ENCODE measurements at regions of chr12 and their contacts with region 1.

Region 1: DNA sequence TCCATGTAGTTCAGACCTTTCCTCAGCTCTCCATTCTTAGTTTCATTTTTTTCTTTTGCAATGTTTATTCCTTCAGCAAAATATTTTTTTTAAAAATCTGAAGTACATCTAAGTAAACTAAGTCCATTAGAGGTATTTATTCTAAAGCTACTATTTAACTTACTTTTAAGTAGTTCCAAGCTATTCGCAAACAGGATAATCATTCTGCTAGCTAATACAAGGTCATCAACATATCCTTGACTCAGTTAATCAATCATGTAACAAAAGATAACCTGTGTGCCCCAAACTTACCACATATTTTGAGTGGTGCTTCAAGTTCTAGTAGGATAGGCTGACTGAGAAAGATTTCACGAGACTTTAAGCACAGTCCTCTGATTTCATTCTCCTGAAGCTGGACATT is 11.2 kb downstream of the PPP1CC start:
- DNase-seq: no peak
- ATAC-seq: no peak
- H3K4me3 ChIP-seq: no peak overlapping the region
- H3K27ac ChIP-seq: no peak overlapping the region
- H3K4me1 ChIP-seq: peaks cover under 1 to 2% of the 10 kb centered on the region in 2 experiments; a peak in 2 of 5 replicates
- H3K27me3 ChIP-seq: no peaks in the 10 kb centered on the region
- CTCF ChIP-seq: no peak
- EP300 ChIP-seq: no peak
- POLR2A ChIP-seq: no peak
- RAD21 ChIP-seq: no peak

Region 2: DNA sequence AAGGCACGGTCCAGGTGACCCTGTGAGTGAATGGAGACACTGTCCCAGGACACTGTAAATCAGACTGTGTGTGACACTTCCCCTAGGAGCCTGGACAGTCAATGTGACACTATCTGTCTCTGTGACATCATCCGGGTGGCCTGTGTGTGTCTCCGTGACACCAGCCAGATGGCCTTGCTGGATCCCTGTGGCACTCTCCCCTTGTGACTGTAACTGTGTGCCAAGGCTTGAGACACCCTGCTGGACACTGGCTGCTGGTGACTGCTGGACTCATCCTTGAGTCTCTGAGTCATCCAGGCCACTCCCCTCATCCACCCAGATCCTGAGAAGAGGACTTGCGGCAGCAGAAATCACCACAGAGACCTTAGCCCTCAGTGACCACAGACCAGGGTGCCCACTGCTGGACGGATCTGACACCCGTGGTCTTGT is 1106.3 kb before region 1 on chr12:
- CTCF ChIA-PET with region 1: no interaction called
- POLR2A ChIA-PET with region 1: no interaction called
- in situ Hi-C with region 1: no loop called
- intact Hi-C with region 1: no loop called
- DNase-seq: peak; percentile 22 to 31 (median 27)
- ATAC-seq: peak; percentile 79
- H3K4me3 ChIP-seq: no peak overlapping the region
- H3K27ac ChIP-seq: no peak overlapping the region
- H3K4me1 ChIP-seq: peaks cover 0 to 3% of the 10 kb centered on the region in 2 experiments; a peak in 1 of 5 replicates
- H3K27me3 ChIP-seq: peaks cover 12 to 36% of the 10 kb centered on the region in 2 experiments; a peak in 4 of 5 replicates
- CTCF ChIP-seq: no peak
- EP300 ChIP-seq: no peak
- POLR2A ChIP-seq: no peak
- RAD21 ChIP-seq: no peak

Region 3: DNA sequence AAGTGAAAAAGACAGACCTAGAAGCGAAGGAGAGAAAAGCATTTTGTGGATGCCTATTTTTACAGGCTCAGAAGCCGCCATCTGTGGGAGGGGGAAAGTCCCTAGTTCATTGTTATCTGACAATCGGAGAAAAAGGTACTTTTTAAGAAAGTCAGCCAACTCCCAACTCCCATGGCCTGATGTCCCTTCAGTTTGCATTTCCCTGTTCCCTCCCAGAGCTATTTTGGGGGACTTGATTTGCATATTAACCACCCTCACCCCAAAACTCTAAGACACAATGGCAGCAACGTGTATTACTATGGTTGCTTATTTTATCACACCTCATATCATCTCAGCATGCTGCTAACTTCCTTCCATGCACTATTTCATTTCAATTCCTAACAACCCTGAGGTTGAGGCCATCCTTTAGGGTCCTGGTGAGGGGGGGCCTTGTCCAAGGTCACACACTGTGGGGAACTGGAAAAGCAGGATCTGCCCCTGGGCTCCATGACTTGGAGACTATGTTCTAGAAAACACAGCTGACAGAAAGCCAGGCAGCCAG is 61.2 kb before region 1 on chr12:
- CTCF ChIA-PET with region 1: no interaction called
- POLR2A ChIA-PET with region 1: no interaction called
- in situ Hi-C with region 1: no loop called
- intact Hi-C with region 1: no loop called
- DNase-seq: no peak
- ATAC-seq: no peak
- H3K4me3 ChIP-seq: no peak overlapping the region
- H3K27ac ChIP-seq: no peak overlapping the region
- H3K4me1 ChIP-seq: no peaks in the 10 kb centered on the region; a peak in 2 of 5 replicates
- H3K27me3 ChIP-seq: peaks cover 2 to 29% of the 10 kb centered on the region in 2 experiments; a peak in 4 of 5 replicates
- CTCF ChIP-seq: no peak
- EP300 ChIP-seq: no peak
- POLR2A ChIP-seq: no peak
- RAD21 ChIP-seq: no peak

Region 4: DNA sequence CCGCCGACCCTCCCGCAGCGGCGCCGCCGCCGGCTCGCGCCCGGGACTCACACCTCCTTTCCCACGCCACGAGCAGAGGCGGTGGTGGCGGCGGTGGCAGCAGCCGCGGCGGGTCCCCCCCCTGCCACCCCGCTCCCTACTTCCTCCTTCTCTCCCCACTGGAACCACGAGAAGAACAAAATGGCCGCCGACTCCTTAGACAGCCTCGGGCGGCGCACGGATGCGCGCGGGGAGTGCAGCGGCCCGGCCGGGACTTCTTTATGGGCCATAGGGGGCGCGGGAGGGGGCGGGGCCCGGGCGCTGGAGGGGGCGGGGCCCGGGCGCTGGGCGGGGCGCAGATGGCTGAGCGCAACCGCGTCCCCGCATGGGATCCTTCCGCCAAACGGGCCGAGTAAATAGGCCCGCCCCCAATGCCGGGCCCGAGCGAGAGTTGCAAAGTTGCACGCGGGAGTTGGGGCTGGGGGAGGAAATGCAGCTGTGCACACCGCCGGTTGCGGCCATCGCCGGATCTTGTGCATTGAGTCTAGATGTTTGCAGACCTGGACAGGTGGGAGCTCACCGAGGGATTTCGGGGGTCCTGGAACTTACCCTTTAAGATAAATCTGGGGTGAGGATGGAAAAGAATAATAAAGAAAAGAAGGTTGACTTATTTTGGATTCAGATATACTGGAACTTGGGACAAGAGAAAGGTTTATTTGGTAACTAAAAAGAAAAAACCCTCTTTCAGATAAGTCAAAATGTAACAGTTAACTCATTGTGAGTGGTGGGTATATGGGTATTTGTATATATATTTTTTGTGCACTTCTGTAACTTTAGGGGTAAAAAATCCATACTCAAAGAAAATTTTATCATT is 11.5 kb after region 1 on chr12 and contains the start of gene PPP1CC:
- CTCF ChIA-PET with region 1: no interaction called
- POLR2A ChIA-PET with region 1: interaction called, 11 read pairs
- in situ Hi-C with region 1: no loop called
- intact Hi-C with region 1: no loop called
- DNase-seq: peak; percentile 94 to 96 (median 95)
- ATAC-seq: peak; percentile 85
- H3K4me3 ChIP-seq: peak within 1 kb of the TSS; percentile 85
- H3K27ac ChIP-seq: peak within 1 kb of the TSS; percentile 87
- H3K4me1 ChIP-seq: peaks cover 16 to 25% of the 10 kb centered on the region in 2 experiments
- H3K27me3 ChIP-seq: no peaks in the 10 kb centered on the region
- CTCF ChIP-seq: no peak
- EP300 ChIP-seq: no peak
- POLR2A ChIP-seq: peak; percentile 92
- RAD21 ChIP-seq: no peak
- polyA plus RNA-seq, gene PPP1CC: 67.4 to 76.3 TPM